ENCODE measurements at regions of chr4 and their contacts with region 1.

Region 1: DNA sequence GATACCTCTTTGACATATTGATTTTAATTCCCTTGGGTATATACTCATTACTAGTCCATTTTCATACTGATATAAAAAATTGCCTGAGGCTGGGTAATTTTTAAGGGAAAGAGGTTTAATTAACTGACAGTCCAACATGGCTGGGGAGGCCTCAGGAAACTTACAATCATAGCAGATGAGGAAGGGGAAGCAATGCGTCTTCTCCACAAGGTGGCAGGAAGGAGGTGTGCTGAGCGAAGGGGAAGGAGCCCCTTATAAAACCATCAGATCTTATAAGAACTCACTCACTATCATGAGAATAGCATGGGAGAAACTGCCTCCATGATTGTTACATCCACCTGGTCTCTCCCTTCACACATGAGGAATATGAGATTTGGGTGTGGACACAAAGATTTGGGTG is 42.4 kb downstream of the MSX1 start:
- DNase-seq: no peak
- ATAC-seq: no peak
- H3K4me3 ChIP-seq: no peak overlapping the region
- H3K4me3 Mint-ChIP-seq: no peak overlapping the region
- H3K27ac ChIP-seq: no peak overlapping the region
- H3K27ac Mint-ChIP-seq: no peak overlapping the region
- H3K4me1 ChIP-seq: no peaks in the 10 kb centered on the region
- H3K4me1 Mint-ChIP-seq: no peaks in the 10 kb centered on the region
- H3K27me3 ChIP-seq: no peaks in the 10 kb centered on the region
- H3K27me3 Mint-ChIP-seq: peaks cover 24 to 29% of the 10 kb centered on the region in 2 donors

Region 2: DNA sequence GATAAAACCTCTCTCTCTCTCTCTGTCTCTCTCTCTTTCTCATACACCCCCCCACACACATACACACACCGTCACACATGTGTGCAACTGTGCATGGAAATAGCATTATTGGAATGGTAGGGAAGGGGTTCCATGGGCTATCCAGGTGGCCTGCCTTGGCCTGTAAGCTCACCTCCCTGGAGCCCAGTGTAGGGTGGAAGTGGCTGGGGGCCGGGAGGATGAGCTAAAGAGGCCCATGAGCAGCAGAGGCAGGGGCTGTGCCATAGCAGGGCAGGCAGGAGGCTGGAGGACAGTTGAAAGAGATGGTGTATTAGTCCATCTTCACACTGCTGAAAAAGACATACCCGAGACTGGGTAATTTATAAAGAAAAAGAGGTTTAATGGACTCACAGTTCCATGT is 43.1 kb after region 1 on chr4:
- CTCF ChIA-PET with region 1: no interaction called
- POLR2A ChIA-PET with region 1: interaction called in 1 of 2 experiments, 10 read pairs
- DNase-seq: no peak
- ATAC-seq: no peak
- H3K4me3 ChIP-seq: no peak overlapping the region
- H3K4me3 Mint-ChIP-seq: no peak overlapping the region
- H3K27ac ChIP-seq: no peak overlapping the region
- H3K27ac Mint-ChIP-seq: no peak overlapping the region
- H3K4me1 ChIP-seq: peaks cover 13 to 17% of the 10 kb centered on the region in 2 experiments
- H3K4me1 Mint-ChIP-seq: peaks cover 19 to 27% (median 24%) of the 10 kb centered on the region in 3 donors
- H3K27me3 ChIP-seq: no peaks in the 10 kb centered on the region
- H3K27me3 Mint-ChIP-seq: peaks cover 0 to 1% of the 10 kb centered on the region in 2 donors